ENCODE measurements at regions of chr15 and their contacts with region 1.

Region 1: GRCh38 chr15:96327155-96327741 is 3.3 kb upstream of the NR2F2 start:
- DNase-seq: no peak
- ATAC-seq: peak; percentile 28 to 64 (median 41)
- H3K4me3 ChIP-seq: peak overlapping the region; percentile 32 to 91 (median 72)
- H3K27ac ChIP-seq: peak overlapping the region; percentile 66 to 90 (median 82)
- H3K4me1 ChIP-seq: peaks cover 0 to 32% (median 5%) of the 10 kb centered on the region in 12 donors
- H3K27me3 ChIP-seq: peaks cover 0 to 87% (median 39%) of the 10 kb centered on the region in 9 donors
- CTCF ChIP-seq: peak; percentile 42 to 83 (median 70)
- POLR2A ChIP-seq: no peak

Region 2: DNA sequence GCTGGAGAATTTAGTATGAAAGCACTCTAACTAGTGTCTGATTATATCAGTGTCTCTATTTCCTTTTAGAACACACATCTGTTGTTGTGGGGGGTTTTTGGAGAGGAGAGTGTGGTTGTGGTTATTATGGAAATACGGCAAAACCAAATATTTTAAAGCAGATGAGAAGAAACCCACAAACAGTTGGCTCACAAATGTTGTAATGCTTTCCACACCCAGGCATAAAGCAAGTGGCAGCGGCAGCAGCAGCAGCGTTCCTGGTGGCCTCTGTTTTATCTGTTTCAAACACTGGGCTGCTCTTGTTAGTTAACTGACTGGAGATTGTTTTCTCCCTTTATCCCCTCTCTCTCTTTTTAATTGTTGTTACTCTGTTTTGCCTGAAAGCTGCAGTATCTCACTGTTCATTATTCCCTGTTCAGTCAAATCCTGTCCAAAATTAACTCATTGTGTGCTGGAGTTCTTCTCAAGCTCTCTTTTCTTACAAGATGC is 1042.3 kb before region 1 on chr15:
- intact Hi-C with region 1: loop called in 1 of 10 experiments (anchors 10 kb)
- DNase-seq: no peak
- ATAC-seq: no peak
- H3K4me3 ChIP-seq: no peak overlapping the region
- H3K27ac ChIP-seq: peak overlapping the region in 7 of 12 donors; percentile 1 to 56 (median 25)
- H3K4me1 ChIP-seq: peaks cover 0 to 33% (median 4%) of the 10 kb centered on the region in 12 donors
- H3K27me3 ChIP-seq: no peaks in the 10 kb centered on the region
- CTCF ChIP-seq: peak in 5 of 12 donors; percentile 6 to 44 (median 37)
- POLR2A ChIP-seq: no peak

Region 3: DNA sequence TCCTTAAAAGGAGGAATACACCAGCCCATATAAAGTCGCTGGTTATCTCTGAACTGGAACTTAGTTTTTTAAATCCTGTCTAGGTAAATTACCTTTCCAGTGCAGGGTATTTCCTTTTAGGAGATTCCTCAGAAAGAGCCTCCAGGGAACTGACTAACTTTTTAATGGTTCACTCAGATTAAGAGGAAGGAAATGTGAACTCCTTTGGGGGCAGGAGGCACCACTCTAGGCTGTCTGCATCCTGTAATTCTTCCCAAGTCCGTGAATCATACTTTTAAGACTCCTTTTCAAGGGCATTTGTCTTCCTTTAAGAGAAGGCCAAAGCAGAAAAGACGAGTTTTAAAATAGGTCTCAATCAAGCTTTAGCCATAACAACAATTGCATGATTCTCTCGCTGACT is 868.0 kb before region 1 on chr15:
- intact Hi-C with region 1: loop called in 2 of 10 experiments (anchors 10 kb)
- DNase-seq: no peak
- ATAC-seq: peak in 3 of 4 donors; percentile 44 to 82 (median 81)
- H3K4me3 ChIP-seq: no peak overlapping the region
- H3K27ac ChIP-seq: peak overlapping the region in 11 of 12 donors; percentile 1 to 73 (median 50)
- H3K4me1 ChIP-seq: peaks cover 0 to 32% (median 13%) of the 10 kb centered on the region in 12 donors
- H3K27me3 ChIP-seq: no peaks in the 10 kb centered on the region
- CTCF ChIP-seq: no peak
- POLR2A ChIP-seq: no peak

Region 4: GRCh38 chr15:95464509-95464908 is 862.7 kb before region 1 on chr15:
- intact Hi-C with region 1: loop called in 2 of 10 experiments (anchors 10 kb)
- DNase-seq: no peak
- ATAC-seq: no peak
- H3K4me3 ChIP-seq: no peak overlapping the region
- H3K27ac ChIP-seq: no peak overlapping the region
- H3K4me1 ChIP-seq: peaks cover 0 to 17% (median 2%) of the 10 kb centered on the region in 12 donors
- H3K27me3 ChIP-seq: no peaks in the 10 kb centered on the region
- CTCF ChIP-seq: no peak
- POLR2A ChIP-seq: no peak

Region 5: GRCh38 chr15:95604634-95605036 is 722.6 kb before region 1 on chr15:
- intact Hi-C with region 1: loop called in 1 of 10 experiments (anchors 10 kb)
- DNase-seq: peak in 2 of 5 donors; percentile 27 to 59
- ATAC-seq: peak in 2 of 4 donors; percentile 62 to 69
- H3K4me3 ChIP-seq: no peak overlapping the region
- H3K27ac ChIP-seq: peak overlapping the region in 8 of 12 donors; percentile 30 to 74 (median 54)
- H3K4me1 ChIP-seq: peaks cover 0 to 25% (median 7%) of the 10 kb centered on the region in 12 donors
- H3K27me3 ChIP-seq: no peaks in the 10 kb centered on the region
- CTCF ChIP-seq: no peak
- POLR2A ChIP-seq: no peak

Region 6: DNA sequence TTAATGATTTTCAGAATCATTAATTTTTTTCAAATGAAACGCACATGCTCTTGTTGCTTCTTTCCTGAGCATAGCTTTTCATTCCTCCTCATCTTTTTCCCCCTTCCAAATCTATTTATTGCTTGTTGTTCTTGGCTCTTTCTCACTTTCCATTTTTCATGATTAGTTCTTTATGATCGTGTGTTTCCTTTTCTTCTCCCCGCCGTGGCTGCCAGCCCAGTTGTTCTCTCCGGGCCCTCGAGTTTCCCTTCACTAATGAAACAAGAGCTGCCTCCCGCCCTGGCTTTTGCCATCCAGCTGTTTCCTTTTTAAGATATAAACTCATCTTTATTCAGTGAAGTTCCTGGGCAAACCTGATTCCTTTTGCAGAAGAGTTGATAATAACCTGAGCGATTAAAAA is 167.0 kb before region 1 on chr15:
- intact Hi-C with region 1: loop called in 1 of 10 experiments (anchors 10 kb)
- DNase-seq: peak; percentile 45 to 64 (median 55)
- ATAC-seq: peak in 2 of 4 donors; percentile 44 to 51
- H3K4me3 ChIP-seq: peak overlapping the region in 1 of 12 donors; percentile 13
- H3K27ac ChIP-seq: peak overlapping the region in 9 of 12 donors; percentile 0 to 51 (median 39)
- H3K4me1 ChIP-seq: peaks cover 0 to 30% (median 4%) of the 10 kb centered on the region in 12 donors
- H3K27me3 ChIP-seq: no peaks in the 10 kb centered on the region
- CTCF ChIP-seq: no peak
- POLR2A ChIP-seq: no peak

Region 7: DNA sequence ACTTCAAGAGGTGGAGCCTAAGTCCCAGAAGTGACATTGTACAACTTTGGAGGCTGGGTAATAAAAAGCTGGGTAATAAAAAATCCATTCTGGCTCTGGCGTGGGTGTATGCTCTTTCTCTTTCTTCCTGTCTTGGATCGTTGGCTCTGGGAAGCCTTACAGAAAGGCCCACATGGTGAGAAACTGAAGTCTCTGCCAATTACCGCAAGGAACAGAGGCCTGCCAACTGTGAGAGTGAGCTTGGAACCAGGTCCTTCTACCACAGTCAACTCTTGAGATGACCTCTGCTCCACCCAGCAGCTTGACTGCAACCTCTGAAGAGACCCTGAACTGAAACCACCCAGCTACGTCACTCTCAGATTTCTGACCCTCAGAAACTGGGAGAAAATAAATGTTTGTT is 54.2 kb after region 1 on chr15:
- intact Hi-C with region 1: no loop called
- DNase-seq: no peak
- ATAC-seq: no peak
- H3K4me3 ChIP-seq: no peak overlapping the region
- H3K27ac ChIP-seq: no peak overlapping the region
- H3K4me1 ChIP-seq: no peaks in the 10 kb centered on the region
- H3K27me3 ChIP-seq: no peaks in the 10 kb centered on the region
- CTCF ChIP-seq: no peak
- POLR2A ChIP-seq: no peak

Measured in heart left ventricle (tissue), 16 donors.